ENCODE measurements at regions of chr6 and their contacts with region 1.

Region 1: DNA sequence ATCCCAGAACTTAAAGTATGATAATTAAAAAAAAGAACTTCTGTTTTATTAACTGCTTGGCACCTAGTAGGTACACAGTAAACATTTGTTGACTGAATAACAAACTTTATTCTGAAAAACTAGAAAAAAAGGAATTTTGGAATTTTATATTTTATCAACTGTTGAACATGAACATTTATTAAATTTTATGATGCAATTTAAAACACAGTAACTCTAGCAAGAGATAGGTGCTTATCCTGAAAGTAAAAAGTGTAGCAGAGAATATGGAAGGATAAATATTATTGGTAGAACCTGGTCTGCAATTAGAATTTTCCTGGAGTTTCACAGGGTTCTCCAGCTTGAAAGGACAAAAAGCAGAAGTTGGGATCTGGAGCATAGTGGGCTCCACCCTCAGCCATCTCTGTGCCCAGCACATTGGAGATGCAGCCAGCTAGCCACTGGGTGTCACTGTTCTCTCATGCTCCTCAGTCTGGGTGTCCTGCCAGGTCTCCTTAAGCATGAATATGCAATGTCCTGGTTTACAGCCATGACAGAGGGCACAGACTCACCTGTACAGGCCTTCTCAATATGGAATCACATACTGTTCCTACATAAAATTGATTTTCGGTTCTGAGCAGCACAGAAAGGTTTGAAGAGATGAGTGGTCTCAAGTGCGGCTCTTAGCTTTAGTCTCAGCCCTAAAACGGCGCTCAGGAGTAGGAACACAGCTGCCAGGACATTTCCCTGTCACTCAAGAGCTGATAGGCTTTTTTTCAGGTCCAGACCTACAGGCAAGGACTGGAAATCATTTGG is 31.7 kb upstream of the IL20RA start:
- DNase-seq: peak; percentile 65 to 76
- H3K4me3 ChIP-seq: no peak overlapping the region
- H3K27ac ChIP-seq: no peak overlapping the region
- H3K4me1 ChIP-seq: no peaks in the 10 kb centered on the region
- H3K27me3 ChIP-seq: no peaks in the 10 kb centered on the region
- CTCF ChIP-seq: peak; percentile 91

Region 2: DNA sequence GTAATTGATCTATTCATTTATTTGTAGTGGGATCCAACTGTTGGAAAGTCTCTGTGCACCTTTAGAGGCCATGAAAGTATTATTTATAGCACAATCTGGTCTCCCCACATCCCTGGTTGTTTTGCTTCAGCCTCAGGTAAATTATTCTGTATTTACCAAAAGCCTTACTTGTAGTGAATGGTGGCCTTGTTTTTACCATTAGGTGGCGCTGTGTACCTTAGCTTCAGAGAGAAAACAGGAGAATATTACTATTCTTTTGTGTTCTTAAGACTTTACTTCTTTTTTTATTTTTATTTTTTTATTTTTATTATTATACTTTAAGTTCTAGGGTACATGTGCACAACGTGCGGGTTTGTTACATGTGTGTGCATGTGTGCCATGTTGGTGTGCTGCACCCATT is 230.4 kb before region 1 on chr6:
- CTCF ChIA-PET with region 1: no interaction called
- POLR2A ChIA-PET with region 1: no interaction called
- intact Hi-C with region 1: loop called (anchors 10 kb)
- DNase-seq: peak; percentile 12 to 50
- H3K4me3 ChIP-seq: no peak overlapping the region
- H3K27ac ChIP-seq: no peak overlapping the region
- H3K4me1 ChIP-seq: no peaks in the 10 kb centered on the region
- H3K27me3 ChIP-seq: no peaks in the 10 kb centered on the region
- CTCF ChIP-seq: peak; percentile 89

Region 3: DNA sequence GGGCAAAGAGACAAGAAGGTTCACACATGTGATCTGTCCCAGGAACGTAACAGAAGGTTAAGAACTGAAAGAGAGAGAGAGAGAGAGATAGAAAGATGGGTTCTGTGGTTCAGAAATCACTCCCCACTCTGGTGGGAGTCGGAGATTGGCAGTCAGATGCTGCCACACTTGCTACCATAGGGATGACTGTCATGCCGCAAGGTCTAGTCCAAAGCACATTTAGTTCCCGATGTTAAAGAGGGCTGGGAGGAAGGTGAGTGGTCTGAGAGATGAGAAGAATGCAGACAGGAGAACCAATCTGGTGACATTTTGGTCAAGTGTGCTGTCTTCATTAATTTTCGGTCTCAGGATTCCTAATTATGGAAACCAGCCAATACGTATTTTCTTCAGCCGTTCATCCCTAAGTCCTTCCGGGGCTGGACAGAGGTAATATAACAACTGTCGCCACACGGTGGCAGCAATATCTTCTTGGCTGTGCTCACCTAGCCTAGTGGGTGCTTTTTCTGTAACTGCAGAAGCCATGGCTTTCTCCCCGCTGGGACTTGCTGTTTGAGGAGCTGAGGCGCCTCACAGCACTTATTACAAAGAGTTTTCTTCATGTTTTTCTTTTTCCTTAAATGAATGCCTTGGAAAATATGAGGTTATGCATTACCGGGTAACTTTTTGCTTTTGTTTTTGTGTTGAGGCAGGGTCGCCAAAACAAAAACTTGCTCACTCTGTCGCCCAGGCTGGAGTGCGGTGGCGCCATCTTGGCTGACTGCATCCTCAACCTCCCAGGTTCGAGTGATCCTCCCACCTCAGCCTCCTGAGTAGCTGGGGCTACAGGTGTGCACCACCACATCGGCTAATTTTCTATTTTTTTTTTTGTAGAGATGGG is 108.4 kb before region 1 on chr6:
- CTCF ChIA-PET with region 1: no interaction called
- POLR2A ChIA-PET with region 1: interaction called, 7 read pairs
- intact Hi-C with region 1: loop called (anchors 5 kb)
- DNase-seq: peak; percentile 68 to 80
- H3K4me3 ChIP-seq: no peak overlapping the region
- H3K27ac ChIP-seq: peak overlapping the region; percentile 97
- H3K4me1 ChIP-seq: peaks cover 37% of the 10 kb centered on the region
- H3K27me3 ChIP-seq: no peaks in the 10 kb centered on the region
- CTCF ChIP-seq: peak; percentile 90

Region 4: GRCh38 chr6:137975188-137975940 is 898.9 kb after region 1 on chr6:
- CTCF ChIA-PET with region 1: no interaction called
- POLR2A ChIA-PET with region 1: no interaction called
- intact Hi-C with region 1: loop called (anchors 5 kb)
- DNase-seq: no peak
- H3K4me3 ChIP-seq: no peak overlapping the region
- H3K27ac ChIP-seq: no peak overlapping the region
- H3K4me1 ChIP-seq: peaks cover 36% of the 10 kb centered on the region
- H3K27me3 ChIP-seq: no peaks in the 10 kb centered on the region
- CTCF ChIP-seq: peak; percentile 77

Region 5: GRCh38 chr6:138001750-138002349 is 925.4 kb after region 1 on chr6:
- CTCF ChIA-PET with region 1: no interaction called
- POLR2A ChIA-PET with region 1: no interaction called
- intact Hi-C with region 1: loop called (anchors 10 kb)
- DNase-seq: peak; percentile 56 to 63
- H3K4me3 ChIP-seq: no peak overlapping the region
- H3K27ac ChIP-seq: no peak overlapping the region
- H3K4me1 ChIP-seq: peaks cover 24% of the 10 kb centered on the region
- H3K27me3 ChIP-seq: no peaks in the 10 kb centered on the region
- CTCF ChIP-seq: peak; percentile 98